Endothelial cell of umbilical vein (primary cell): ENCODE measurements at regions of chr22 and their contacts with region 1.

Region 1: DNA sequence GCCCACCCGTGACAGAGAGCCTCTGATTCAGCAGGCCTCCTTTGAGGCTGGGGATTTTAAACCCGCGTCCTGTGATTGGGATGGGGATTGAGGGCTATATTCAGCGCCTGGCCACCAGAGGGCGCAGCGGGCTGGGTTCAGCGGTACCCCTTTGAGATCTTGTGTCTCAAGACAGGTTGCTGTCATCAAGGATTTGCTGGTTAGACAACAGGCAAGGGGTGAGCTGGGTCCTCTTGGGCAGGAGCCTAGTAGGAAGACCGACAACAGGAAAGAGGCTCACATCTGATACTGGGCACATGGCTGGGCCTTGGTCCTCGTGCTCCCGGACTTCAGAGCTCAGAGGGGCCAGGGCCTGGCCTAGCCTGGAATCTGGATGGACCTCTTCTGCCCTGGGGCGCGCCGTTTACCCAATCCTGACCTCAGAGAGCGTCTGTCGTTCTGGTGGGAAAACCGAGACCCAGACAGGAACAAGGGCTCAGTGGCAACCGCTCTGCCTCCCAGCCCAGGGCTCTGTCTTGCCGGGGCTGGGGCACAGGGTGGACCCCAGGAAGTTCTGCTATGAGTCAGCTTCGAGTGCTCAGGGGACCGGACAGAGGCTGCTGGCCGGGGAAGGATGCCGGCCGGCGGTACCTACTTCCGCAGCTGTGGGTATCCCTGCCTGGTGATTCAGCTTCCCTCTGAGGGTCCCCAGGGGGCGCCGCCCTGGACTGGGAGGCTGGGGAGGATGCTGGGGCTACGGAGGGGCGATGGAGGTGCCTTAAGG is 929 bp upstream of the SLC35E4 start:
- DNase-seq: peak; percentile 91
- H3K4me3 ChIP-seq: peak overlapping the region; percentile 20 to 52 (median 51)
- H3K27ac ChIP-seq: peak overlapping the region; percentile 93
- H3K4me1 ChIP-seq: peaks cover 31% of the 10 kb centered on the region
- H3K27me3 ChIP-seq: no peaks in the 10 kb centered on the region
- CTCF ChIP-seq: peak; percentile 95 to 98
- POLR2A ChIP-seq: no peak

Region 2: DNA sequence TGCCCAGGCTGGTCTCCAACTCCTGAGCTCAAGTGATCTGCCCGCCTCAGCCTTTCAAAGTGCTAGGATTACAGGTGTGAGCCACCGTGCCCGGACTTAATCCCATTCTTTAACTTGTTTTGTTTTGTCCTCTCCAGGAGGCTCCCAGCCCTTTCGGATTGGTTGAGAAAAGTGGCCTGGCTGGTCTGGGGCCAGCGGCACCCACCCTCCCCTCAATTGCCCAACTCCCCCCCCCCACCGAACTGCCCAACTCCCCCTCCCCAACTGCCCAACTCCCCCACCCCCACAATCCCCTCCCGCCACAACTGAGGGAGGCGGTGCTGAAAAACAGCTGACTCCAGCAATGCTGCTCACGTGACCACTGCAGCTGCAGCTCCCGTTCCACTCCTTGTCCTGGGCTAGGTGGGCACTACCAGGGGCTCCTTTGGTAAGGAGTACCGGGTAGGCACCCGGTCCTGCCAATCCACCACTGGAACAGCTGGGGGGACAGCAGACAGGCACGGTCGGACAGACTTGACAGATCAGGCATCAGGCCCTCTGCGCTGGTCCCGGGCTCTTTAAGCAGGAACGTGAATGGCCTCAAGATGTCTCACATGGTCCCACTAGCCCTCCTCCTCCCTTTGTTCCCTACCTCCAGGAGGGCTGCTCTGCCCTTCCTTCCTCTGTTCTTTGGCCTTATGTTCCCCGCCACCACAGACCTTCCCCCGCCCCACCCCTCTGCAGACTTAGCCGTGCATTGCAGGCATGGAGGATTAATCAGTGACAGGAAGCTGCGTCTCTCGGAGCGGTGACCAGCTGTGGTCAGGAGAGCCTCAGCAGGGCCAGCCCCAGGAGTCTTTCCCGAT is 28.0 kb before region 1 on chr22 and contains the start of gene TCN2:
- CTCF ChIA-PET with region 1: interaction called, 51 read pairs
- POLR2A ChIA-PET with region 1: interaction called, 5 read pairs
- dilution Hi-C with region 1: no loop called
- intact Hi-C with region 1: loop called (anchors 1 kb)
- DNase-seq: peak; percentile 83
- H3K4me3 ChIP-seq: peak within 1 kb of the TSS; percentile 11 to 55 (median 35)
- H3K27ac ChIP-seq: peak within 1 kb of the TSS; percentile 73
- H3K4me1 ChIP-seq: peaks cover 37% of the 10 kb centered on the region
- H3K27me3 ChIP-seq: no peaks in the 10 kb centered on the region
- CTCF ChIP-seq: no peak
- POLR2A ChIP-seq: peak; percentile 84
- total RNA-seq, gene TCN2: 62.3 and 80.6 TPM in 2 replicates

Region 3: DNA sequence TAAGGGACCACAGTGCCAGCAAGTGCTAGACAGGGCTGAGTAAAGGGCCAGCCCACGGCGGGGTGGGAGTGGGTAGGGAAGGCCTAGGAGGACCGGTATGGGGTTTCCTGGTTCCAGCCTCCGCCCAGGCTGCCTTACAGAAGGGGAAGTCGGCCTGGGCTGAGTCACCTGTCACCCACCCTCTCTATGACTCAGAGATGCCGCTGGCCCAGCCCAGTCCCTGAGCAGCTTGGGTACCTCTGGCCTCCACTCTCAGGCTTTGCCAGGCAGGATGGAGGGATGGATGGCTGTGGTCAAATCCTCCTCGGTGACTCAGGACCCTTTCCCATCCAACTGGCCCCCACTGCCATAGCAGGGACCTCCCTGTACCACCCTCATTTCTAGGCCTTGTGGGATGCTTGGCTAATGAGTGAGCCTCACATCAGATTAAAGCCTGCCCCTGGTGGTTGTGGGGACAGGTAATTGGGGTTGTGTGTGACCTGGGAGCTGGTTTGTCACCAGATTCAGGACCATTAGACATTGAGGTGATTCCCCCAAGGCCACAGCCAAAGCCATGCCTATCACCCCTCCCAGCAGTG is 14.9 kb after region 1 on chr22:
- CTCF ChIA-PET with region 1: interaction called, 24 read pairs
- POLR2A ChIA-PET with region 1: interaction called, 6 read pairs
- dilution Hi-C with region 1: no loop called
- intact Hi-C with region 1: loop called (anchors 1 kb)
- DNase-seq: peak; percentile 66
- H3K4me3 ChIP-seq: no peak overlapping the region
- H3K27ac ChIP-seq: peak overlapping the region; percentile 51
- H3K4me1 ChIP-seq: peaks cover 11% of the 10 kb centered on the region
- H3K27me3 ChIP-seq: no peaks in the 10 kb centered on the region
- CTCF ChIP-seq: no peak
- POLR2A ChIP-seq: no peak

Region 4: GRCh38 chr22:30667494-30668385 is 33.1 kb after region 1 on chr22 and contains the start of gene DUSP18:
- CTCF ChIA-PET with region 1: interaction called, 27 read pairs
- POLR2A ChIA-PET with region 1: no interaction called
- dilution Hi-C with region 1: no loop called
- intact Hi-C with region 1: loop called (anchors 1 kb)
- DNase-seq: peak; percentile 94
- H3K4me3 ChIP-seq: peak within 1 kb of the TSS; percentile 35 to 71 (median 66)
- H3K27ac ChIP-seq: peak within 1 kb of the TSS; percentile 25
- H3K4me1 ChIP-seq: peaks cover 18% of the 10 kb centered on the region
- H3K27me3 ChIP-seq: no peaks in the 10 kb centered on the region
- CTCF ChIP-seq: peak; percentile 19 to 41
- POLR2A ChIP-seq: peak; percentile 77
- total RNA-seq, gene DUSP18: 17.5 and 18.3 TPM in 2 replicates

Region 5: DNA sequence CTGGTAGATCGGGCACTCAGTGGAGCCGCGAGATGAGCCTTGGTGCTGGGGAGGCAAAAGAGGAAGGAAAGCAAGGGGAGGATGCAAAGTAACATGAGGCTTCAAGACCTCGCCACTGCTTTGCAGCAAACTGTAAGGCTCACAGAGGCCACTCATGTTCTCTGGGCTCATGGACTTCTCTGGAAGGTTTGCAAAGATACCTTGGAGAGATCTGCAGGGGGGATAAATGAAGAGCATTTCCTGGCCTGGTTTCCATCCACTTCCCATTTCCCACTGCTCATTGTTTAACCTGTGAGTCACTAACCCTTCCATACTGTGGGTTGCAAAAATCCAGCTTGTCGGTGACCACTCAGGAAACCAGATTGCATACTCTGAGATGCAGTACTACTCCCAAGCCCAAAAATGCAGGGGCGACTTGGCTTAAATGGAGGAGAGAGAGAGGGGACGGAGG is 98.6 kb after region 1 on chr22:
- CTCF ChIA-PET with region 1: interaction called, 6 read pairs
- POLR2A ChIA-PET with region 1: interaction called, 3 read pairs
- dilution Hi-C with region 1: no loop called
- intact Hi-C with region 1: loop called (anchors 2 kb)
- DNase-seq: peak; percentile 72
- H3K4me3 ChIP-seq: no peak overlapping the region
- H3K27ac ChIP-seq: peak overlapping the region; percentile 14
- H3K4me1 ChIP-seq: peaks cover 28% of the 10 kb centered on the region
- H3K27me3 ChIP-seq: no peaks in the 10 kb centered on the region
- CTCF ChIP-seq: no peak
- POLR2A ChIP-seq: no peak

Region 6: GRCh38 chr22:30763815-30764686 is 129.4 kb after region 1 on chr22:
- CTCF ChIA-PET with region 1: interaction called, 13 read pairs
- POLR2A ChIA-PET with region 1: no interaction called
- dilution Hi-C with region 1: no loop called
- intact Hi-C with region 1: no loop called
- DNase-seq: peak; percentile 77
- H3K4me3 ChIP-seq: no peak overlapping the region
- H3K27ac ChIP-seq: no peak overlapping the region
- H3K4me1 ChIP-seq: no peaks in the 10 kb centered on the region
- H3K27me3 ChIP-seq: no peaks in the 10 kb centered on the region
- CTCF ChIP-seq: peak; percentile 67 to 71
- POLR2A ChIP-seq: no peak

Region 7: DNA sequence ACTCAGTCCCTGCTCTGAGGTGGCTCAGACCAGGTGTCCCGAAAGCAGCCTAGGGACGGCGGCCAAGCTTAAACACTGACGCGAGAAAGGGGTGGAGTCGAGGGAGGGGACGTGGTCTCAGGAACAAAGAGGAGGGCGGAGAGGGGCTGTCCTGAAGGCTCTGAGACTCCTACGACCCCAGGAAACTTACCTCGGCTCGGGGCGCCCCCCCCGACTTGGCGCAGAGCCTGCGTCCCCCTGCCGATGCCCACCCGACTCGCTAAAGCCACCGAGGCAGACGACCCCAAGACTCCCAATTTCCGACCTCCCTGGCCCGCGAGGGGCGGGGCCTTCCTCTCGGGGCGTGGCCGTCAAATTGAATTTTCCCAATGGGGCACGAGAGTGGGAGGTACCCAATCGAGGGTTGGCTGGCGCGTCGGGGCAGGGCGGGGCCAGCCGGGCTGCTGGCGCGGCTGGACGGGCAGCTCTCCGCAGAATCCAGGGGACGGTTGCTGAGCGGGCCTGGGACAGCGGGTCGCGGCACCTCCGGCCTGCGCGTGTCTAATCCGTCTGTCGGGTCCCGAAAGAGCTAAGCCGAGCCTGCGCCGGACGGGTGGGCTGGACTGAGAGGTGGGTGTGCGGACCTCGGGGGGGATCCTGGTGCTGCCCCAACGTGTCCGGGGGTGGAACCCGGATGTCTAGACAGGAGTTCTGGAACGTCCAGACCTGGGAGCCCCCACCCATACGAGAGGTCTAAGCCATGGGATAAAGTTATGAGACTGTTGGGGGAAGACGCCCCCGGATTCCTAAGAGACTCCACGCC is 446.4 kb after region 1 on chr22 and contains the start of gene SMTN:
- CTCF ChIA-PET with region 1: no interaction called
- POLR2A ChIA-PET with region 1: no interaction called
- dilution Hi-C with region 1: no loop called
- intact Hi-C with region 1: loop called (anchors 1 kb)
- DNase-seq: peak; percentile 96
- H3K4me3 ChIP-seq: peak within 1 kb of the TSS; percentile 47 to 85 (median 65)
- H3K27ac ChIP-seq: peak within 1 kb of the TSS; percentile 96
- H3K4me1 ChIP-seq: peaks cover 33% of the 10 kb centered on the region
- H3K27me3 ChIP-seq: no peaks in the 10 kb centered on the region
- CTCF ChIP-seq: no peak
- POLR2A ChIP-seq: peak; percentile 97
- total RNA-seq, gene SMTN: 197 and 201 TPM in 2 replicates